Aorta (tissue), 5 donors: ENCODE measurements at regions of chr13 and their contacts with region 1.

Region 1: DNA sequence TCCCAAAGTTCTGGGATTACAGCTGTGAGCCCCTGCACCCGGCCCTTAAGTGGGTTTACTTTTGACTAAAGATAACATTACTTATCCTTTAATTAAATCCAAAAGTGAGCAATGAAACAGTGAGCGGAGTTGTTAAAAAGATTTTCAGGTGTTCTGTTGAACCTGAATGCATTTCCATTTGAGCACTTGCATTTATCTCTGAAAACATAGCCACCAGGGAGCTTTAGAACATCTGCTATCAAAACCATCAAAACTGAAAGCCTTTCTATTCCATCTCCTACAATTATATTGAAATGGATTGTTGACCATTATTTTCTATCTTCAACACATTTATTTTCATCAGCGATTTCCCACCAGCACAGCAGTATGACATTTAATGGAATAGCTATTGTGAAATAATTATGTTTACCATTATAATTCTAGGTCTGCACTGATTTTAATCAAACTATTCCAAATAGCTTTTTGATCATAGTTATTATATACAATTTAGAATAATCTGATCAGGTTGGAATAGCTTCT is 269.0 kb downstream of the FGF14 start:
- DNase-seq: no peak
- ATAC-seq: no peak
- H3K4me3 ChIP-seq: no peak overlapping the region
- H3K27ac ChIP-seq: no peak overlapping the region
- H3K4me1 ChIP-seq: no peaks in the 10 kb centered on the region
- H3K27me3 ChIP-seq: no peaks in the 10 kb centered on the region

Region 2: DNA sequence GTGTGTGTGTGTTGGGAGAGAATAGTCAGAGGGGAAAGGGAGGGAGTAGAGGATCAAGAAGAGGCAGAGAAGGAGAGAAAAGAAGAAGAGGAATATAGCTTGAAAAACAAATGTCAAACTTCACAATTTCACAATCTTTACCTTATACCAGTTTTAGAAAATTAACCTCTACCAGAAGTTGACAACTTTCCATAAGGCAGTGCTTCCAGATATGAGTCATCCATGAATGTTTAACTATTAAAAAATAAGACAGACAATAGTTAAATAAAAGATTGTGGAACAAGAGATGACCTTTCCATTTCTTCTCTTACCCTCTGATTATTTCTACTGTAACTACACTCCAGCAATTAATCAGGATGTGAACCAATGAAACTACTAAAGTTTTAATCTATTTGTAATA is 451.0 kb before region 1 on chr13:
- intact Hi-C with region 1: no loop called
- DNase-seq: no peak
- ATAC-seq: no peak
- H3K4me3 ChIP-seq: no peak overlapping the region
- H3K27ac ChIP-seq: no peak overlapping the region
- H3K4me1 ChIP-seq: peaks cover 0 to 7% of the 10 kb centered on the region in 2 donors
- H3K27me3 ChIP-seq: no peaks in the 10 kb centered on the region

Region 3: DNA sequence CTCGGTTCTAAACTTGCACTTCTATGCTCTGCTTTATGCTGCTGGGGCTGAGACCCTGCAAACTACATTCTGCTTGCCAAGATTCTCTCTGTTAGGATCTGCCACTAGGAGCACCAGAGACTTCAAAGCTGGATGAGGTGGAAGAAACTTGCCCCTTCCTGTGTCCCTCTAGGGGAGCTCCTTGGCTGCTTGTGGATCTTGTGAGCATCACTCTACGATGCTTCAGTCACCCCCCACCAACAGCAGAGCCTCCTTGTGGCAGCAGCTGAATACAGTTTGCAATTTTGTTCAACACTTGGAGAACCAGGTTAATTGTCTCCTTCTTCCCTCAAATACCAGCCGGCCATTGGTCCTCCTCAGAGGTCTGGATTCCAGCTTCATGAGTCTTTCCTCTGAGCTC is 41.6 kb before region 1 on chr13:
- intact Hi-C with region 1: loop called in 1 of 2 experiments (anchors 2 kb)
- DNase-seq: no peak
- ATAC-seq: no peak
- H3K4me3 ChIP-seq: no peak overlapping the region
- H3K27ac ChIP-seq: no peak overlapping the region
- H3K4me1 ChIP-seq: no peaks in the 10 kb centered on the region
- H3K27me3 ChIP-seq: no peaks in the 10 kb centered on the region

Region 4: GRCh38 chr13:102197193-102197592 is 64.4 kb after region 1 on chr13:
- intact Hi-C with region 1: no loop called
- DNase-seq: no peak
- ATAC-seq: no peak
- H3K4me3 ChIP-seq: no peak overlapping the region
- H3K27ac ChIP-seq: no peak overlapping the region
- H3K4me1 ChIP-seq: no peaks in the 10 kb centered on the region
- H3K27me3 ChIP-seq: no peaks in the 10 kb centered on the region